Mammary epithelial cell (primary cell): ENCODE measurements at regions of chr13 and their contacts with region 1.

Region 1: GRCh38 chr13:28718543-28719226 is at the start of gene SLC46A3:
- DNase-seq: peak; percentile 94
- H3K4me3 ChIP-seq: peak within 1 kb of the TSS; percentile 60 to 66 (median 63)
- H3K27ac ChIP-seq: peak within 1 kb of the TSS; percentile 48
- H3K4me1 ChIP-seq: peaks cover 31% of the 10 kb centered on the region
- H3K27me3 ChIP-seq: no peaks in the 10 kb centered on the region
- CTCF ChIP-seq: peak in 1 of 2 donors; percentile 31
- total RNA-seq, gene SLC46A3: 1.9 to 5.5 TPM

Region 2: DNA sequence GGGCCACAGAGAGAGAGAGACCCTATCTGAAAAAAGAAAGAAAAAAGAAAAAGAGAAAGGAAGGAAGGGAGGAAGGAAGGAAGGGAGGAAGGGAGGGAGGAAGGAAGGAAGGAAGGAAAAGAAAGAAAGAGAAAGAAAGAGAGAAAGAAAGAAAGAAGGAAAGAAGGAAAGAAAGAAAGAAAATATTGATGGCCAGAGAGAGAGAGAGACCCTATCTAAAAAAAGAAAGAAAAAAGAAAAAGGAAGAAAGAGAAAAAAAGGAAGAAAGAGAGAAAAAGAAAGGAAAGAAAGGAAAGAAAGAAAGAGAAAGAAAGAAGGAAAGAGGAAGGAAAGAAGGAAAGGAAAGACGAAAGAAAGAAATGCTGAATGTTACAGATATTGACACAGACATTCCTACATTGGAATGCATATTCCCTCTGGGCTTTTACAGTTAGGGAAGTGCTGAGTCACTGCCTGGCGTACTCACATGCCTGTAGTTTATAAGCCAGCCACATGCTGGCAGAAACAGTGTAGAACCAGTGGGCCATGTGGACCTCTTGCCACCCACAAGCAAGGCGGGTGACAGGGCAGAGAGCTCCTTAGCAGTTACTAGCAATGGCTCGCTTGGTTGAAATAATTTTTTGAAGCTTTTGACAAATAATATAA is 34.7 kb after region 1 on chr13:
- CTCF ChIA-PET with region 1: no interaction called
- dilution Hi-C with region 1: no loop called
- in situ Hi-C with region 1: no loop called
- intact Hi-C with region 1: loop called (anchors 2 kb)
- DNase-seq: peak; percentile 73
- H3K4me3 ChIP-seq: peak overlapping the region in 1 of 3 experiments; percentile 21
- H3K27ac ChIP-seq: peak overlapping the region; percentile 32
- H3K4me1 ChIP-seq: peaks cover 12% of the 10 kb centered on the region
- H3K27me3 ChIP-seq: no peaks in the 10 kb centered on the region
- CTCF ChIP-seq: peak in 1 of 2 donors; percentile 28